ENCODE measurements at regions of chr13 and their contacts with region 1.

Region 1: DNA sequence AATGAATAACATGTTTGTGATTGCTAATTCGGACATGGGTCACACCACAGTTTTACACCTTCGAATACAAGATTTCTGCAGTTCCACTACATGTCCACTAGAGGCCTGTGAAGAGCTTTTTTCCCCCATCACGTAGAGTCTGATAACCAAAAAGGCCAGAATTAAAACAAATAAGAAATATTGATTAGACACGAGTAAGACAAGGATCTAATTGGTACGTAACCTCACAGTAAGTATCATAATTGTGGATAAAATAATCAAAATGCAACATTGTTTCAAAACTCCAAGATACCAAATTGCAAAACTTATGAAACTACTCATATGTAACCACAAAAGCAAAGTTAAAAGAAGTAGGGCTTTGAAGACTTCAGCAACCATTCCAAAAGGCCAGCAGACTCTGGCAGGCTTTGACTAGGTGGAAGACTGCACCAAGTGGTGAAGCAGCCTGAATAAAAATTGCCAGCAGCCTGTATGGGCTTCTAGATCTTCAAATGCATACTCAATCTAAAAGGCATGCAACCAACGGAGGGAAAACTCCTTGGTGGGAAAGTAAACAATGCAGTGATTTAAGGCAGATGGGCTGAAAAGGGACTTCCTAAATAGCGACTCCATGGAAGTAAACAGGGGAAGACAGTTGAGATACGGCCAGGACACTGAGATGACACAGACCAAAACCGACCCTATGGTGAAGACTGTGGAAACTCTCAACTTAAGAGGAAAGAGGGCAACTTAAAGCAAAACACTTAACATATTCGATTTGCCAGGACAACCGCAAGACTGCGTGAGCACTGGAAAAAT is 56.7 kb downstream of the STARD13 start:
- DNase-seq: no peak
- H3K4me3 ChIP-seq: no peak overlapping the region
- H3K27ac ChIP-seq: peak overlapping the region; percentile 3
- H3K4me1 ChIP-seq: peaks cover 47% of the 10 kb centered on the region
- H3K27me3 ChIP-seq: no peaks in the 10 kb centered on the region
- CTCF ChIP-seq: peak; percentile 98

Region 2: GRCh38 chr13:33109801-33110200 is 119.0 kb before region 1 on chr13:
- CTCF ChIA-PET with region 1: no interaction called
- dilution Hi-C with region 1: no loop called
- in situ Hi-C with region 1: no loop called
- intact Hi-C with region 1: no loop called
- DNase-seq: no peak
- H3K4me3 ChIP-seq: no peak overlapping the region
- H3K27ac ChIP-seq: no peak overlapping the region
- H3K4me1 ChIP-seq: no peaks in the 10 kb centered on the region
- H3K27me3 ChIP-seq: no peaks in the 10 kb centered on the region
- CTCF ChIP-seq: peak; percentile 13 to 29

Region 3: DNA sequence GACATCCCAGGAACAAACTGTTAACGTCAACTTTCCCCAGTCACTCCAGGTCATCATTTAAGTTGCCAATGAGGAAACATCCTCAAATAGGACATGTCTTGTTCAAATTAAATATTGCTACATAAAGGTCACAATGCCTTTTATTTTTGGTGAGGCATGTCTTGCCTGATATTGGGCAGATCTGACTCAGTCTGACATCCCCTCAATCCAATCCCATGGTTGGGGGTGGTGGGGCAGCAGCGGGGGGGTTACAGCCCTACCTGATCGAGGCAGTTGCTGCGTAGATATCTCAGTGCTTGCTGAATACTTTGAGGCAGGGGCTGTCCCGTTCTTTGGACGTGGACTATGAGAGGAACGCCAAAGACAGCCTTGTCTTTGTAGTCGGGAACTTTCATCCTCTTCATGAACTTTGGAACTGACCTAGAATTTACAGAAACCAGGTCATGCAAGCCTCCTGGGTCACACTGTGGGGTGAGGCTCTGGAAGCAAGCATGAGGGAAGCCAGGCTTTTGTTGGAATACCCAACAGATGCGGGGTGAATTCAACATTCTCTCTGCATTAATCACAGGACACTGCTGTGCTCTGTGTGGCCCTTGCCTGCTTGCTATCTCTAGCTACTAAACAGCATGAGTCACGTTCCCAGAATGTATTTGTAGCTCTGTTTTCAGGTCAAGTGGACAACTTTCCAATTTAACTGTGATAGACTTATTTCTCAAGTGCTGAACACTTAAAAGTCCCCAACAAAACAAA is 102.9 kb before region 1 on chr13:
- CTCF ChIA-PET with region 1: no interaction called
- dilution Hi-C with region 1: no loop called
- in situ Hi-C with region 1: no loop called
- intact Hi-C with region 1: no loop called
- DNase-seq: peak; percentile 80
- H3K4me3 ChIP-seq: no peak overlapping the region
- H3K27ac ChIP-seq: peak overlapping the region; percentile 33
- H3K4me1 ChIP-seq: peaks cover 17% of the 10 kb centered on the region
- H3K27me3 ChIP-seq: no peaks in the 10 kb centered on the region
- CTCF ChIP-seq: no peak

Region 4: GRCh38 chr13:33262062-33262497 is 33.2 kb after region 1 on chr13:
- CTCF ChIA-PET with region 1: no interaction called
- dilution Hi-C with region 1: no loop called
- in situ Hi-C with region 1: no loop called
- intact Hi-C with region 1: loop called (anchors 2 kb)
- DNase-seq: peak; percentile 91
- H3K4me3 ChIP-seq: no peak overlapping the region
- H3K27ac ChIP-seq: no peak overlapping the region
- H3K4me1 ChIP-seq: peaks cover 36% of the 10 kb centered on the region
- H3K27me3 ChIP-seq: no peaks in the 10 kb centered on the region
- CTCF ChIP-seq: no peak

Region 5: DNA sequence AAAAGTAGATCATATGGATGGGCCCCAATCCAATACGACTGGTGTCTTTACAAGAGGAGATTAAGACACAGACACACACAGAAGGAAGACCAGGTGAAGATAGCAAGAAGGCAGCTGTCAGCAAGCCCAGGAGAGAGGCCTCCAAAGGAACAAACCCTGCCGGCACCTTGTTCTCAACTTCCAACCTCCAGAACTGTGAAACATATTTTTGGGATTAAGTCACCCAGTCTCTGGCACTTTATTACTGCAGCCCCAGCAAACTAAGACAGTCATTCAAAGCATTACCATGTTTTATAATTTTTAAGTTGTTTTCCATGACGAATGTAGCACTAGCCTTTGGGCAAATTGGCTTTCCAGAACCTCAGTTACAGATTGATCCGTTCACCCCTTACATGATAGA is 45.4 kb after region 1 on chr13:
- CTCF ChIA-PET with region 1: no interaction called
- dilution Hi-C with region 1: no loop called
- in situ Hi-C with region 1: no loop called
- intact Hi-C with region 1: no loop called
- DNase-seq: no peak
- H3K4me3 ChIP-seq: no peak overlapping the region
- H3K27ac ChIP-seq: no peak overlapping the region
- H3K4me1 ChIP-seq: peaks cover 29% of the 10 kb centered on the region
- H3K27me3 ChIP-seq: no peaks in the 10 kb centered on the region
- CTCF ChIP-seq: no peak

Region 6: GRCh38 chr13:33285420-33286124 is 56.7 kb after region 1 on chr13 and contains the start of gene STARD13:
- CTCF ChIA-PET with region 1: no interaction called
- dilution Hi-C with region 1: no loop called
- in situ Hi-C with region 1: no loop called
- intact Hi-C with region 1: loop called (anchors 1 kb)
- DNase-seq: peak; percentile 96
- H3K4me3 ChIP-seq: peak within 1 kb of the TSS; percentile 67 to 94 (median 71)
- H3K27ac ChIP-seq: peak within 1 kb of the TSS; percentile 99
- H3K4me1 ChIP-seq: peaks cover 29% of the 10 kb centered on the region
- H3K27me3 ChIP-seq: no peaks in the 10 kb centered on the region
- CTCF ChIP-seq: peak; percentile 20 to 36
- total RNA-seq, gene STARD13: 10.8 to 15.5 TPM

Region 7: DNA sequence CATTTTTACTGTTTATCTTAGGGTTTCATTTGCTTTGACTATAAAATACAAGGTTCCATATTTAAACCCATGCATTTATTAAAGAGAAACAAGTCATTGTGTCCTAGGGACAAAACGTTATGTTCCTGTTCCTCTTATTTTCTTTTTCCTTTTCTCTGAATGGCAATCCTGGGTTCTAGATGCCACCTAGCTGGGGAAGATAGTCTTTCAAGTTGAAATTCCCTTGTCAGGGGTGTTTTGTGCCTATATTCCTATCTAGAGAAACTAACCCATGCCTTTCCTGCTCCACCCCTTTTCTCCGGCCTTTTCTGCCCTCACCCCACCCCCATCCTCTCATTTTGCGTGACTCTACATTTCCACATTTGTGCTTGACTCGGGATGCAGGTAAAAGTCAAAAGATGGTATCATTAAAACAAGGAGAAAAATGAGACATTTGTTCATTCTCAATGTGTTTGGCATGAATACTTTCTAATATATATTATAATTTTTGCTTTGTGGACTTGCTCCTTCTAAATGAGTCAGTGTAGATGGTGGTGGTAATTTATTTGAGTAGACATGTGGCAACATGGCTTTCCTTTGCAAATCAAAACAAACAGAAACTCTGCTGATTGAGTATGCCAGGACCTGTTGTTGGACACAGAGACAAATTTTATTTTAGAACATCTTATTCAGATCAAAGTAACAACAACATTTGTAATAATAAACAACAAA is 83.5 kb after region 1 on chr13:
- CTCF ChIA-PET with region 1: interaction called, 3 read pairs
- dilution Hi-C with region 1: no loop called
- in situ Hi-C with region 1: no loop called
- intact Hi-C with region 1: loop called (anchors 1 kb)
- DNase-seq: peak; percentile 36
- H3K4me3 ChIP-seq: no peak overlapping the region
- H3K27ac ChIP-seq: no peak overlapping the region
- H3K4me1 ChIP-seq: no peaks in the 10 kb centered on the region
- H3K27me3 ChIP-seq: no peaks in the 10 kb centered on the region
- CTCF ChIP-seq: peak in 1 of 2 donors; percentile 45

Region 8: GRCh38 chr13:33322543-33322809 is 93.6 kb after region 1 on chr13:
- CTCF ChIA-PET with region 1: no interaction called
- dilution Hi-C with region 1: no loop called
- in situ Hi-C with region 1: no loop called
- intact Hi-C with region 1: no loop called
- DNase-seq: no peak
- H3K4me3 ChIP-seq: no peak overlapping the region
- H3K27ac ChIP-seq: no peak overlapping the region
- H3K4me1 ChIP-seq: no peaks in the 10 kb centered on the region
- H3K27me3 ChIP-seq: no peaks in the 10 kb centered on the region
- CTCF ChIP-seq: no peak

Region 9: DNA sequence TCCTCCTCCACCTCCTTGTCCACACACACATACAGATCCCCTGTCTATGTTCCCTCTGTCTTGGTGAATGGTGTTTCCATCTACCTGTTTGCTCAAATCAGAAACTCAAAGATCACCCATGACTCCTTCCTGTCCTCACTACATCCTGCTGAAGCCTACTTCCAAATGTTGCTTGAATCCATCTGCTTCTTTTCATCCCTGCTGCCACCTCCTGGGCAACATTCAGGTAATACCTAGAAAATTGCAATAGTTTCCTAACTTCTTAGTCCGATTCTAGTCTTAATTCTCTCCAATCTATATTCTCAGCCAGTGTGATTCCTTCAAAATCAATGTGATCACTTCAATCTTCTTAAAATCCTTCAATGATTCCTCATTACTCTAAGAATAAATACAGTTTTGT is 212.2 kb after region 1 on chr13:
- CTCF ChIA-PET with region 1: no interaction called
- dilution Hi-C with region 1: no loop called
- in situ Hi-C with region 1: no loop called
- intact Hi-C with region 1: loop called (anchors 1 kb)
- DNase-seq: peak; percentile 36
- H3K4me3 ChIP-seq: no peak overlapping the region
- H3K27ac ChIP-seq: no peak overlapping the region
- H3K4me1 ChIP-seq: no peaks in the 10 kb centered on the region
- H3K27me3 ChIP-seq: no peaks in the 10 kb centered on the region
- CTCF ChIP-seq: peak; percentile 31 to 55

Region 10: DNA sequence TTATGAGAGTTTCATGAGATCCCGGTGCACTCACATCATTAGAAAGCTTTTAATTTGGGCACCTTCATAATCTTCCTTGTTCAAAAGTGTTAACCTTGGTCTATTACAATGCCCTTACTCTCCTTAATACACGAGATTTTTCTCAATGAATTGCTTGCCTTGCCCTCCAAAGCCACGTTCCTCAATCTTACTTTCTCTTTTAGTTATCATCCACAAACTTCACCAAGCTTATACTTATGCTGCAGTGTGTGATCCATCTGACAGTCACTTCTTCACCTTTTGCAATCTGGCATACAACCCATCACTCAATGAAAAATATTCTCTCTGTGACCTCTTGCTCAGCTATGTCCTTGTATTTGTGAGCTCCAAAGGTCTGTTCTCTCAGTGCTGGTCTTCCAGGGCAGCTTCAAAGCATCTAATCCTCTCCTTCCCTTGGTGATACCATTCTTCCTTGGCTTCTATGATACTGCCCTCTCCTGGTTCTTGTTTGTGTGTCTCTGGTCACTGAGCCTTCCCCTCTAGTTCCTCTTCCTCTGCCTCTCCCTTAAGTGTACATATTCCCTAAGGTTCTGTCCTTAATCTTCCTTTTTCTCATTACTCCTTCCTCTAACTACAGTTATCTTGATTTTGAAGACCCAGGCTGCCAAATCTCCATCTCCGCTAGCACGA is 258.9 kb after region 1 on chr13:
- CTCF ChIA-PET with region 1: interaction called, 3 read pairs
- dilution Hi-C with region 1: no loop called
- in situ Hi-C with region 1: no loop called
- intact Hi-C with region 1: loop called (anchors 1 kb)
- DNase-seq: peak; percentile 38
- H3K4me3 ChIP-seq: no peak overlapping the region
- H3K27ac ChIP-seq: no peak overlapping the region
- H3K4me1 ChIP-seq: peaks cover 10% of the 10 kb centered on the region
- H3K27me3 ChIP-seq: no peaks in the 10 kb centered on the region
- CTCF ChIP-seq: peak; percentile 31 to 40

Measured in mammary epithelial cell (primary cell).